PC-3 (cell line): ENCODE measurements at regions of chr14 and their contacts with region 1.

Region 1: GRCh38 chr14:91323671-91324605 is 79.4 kb upstream of the GPR68 start:
- DNase-seq: peak; percentile 70
- ATAC-seq: peak; percentile 63
- H3K4me3 ChIP-seq: no peak overlapping the region
- H3K27ac ChIP-seq: no peak overlapping the region
- H3K4me1 ChIP-seq: no peaks in the 10 kb centered on the region
- H3K27me3 ChIP-seq: no peaks in the 10 kb centered on the region
- CTCF ChIP-seq: peak; percentile 98

Region 2: GRCh38 chr14:91060351-91061055 is 263.4 kb before region 1 on chr14 and contains the start of gene RPS6KA5:
- CTCF ChIA-PET with region 1: no interaction called
- POLR2A ChIA-PET with region 1: no interaction called
- intact Hi-C with region 1: no loop called
- DNase-seq: peak; percentile 100
- ATAC-seq: peak; percentile 89
- H3K4me3 ChIP-seq: peak within 1 kb of the TSS; percentile 80
- H3K27ac ChIP-seq: peak within 1 kb of the TSS; percentile 71
- H3K4me1 ChIP-seq: peaks cover 18% of the 10 kb centered on the region
- H3K27me3 ChIP-seq: no peaks in the 10 kb centered on the region
- CTCF ChIP-seq: 0 out of 2 replicates have a peak, but pooled peaks have one; percentile 19
- total RNA-seq, gene RPS6KA5: 8.6 and 10.7 TPM in 2 replicates

Region 3: DNA sequence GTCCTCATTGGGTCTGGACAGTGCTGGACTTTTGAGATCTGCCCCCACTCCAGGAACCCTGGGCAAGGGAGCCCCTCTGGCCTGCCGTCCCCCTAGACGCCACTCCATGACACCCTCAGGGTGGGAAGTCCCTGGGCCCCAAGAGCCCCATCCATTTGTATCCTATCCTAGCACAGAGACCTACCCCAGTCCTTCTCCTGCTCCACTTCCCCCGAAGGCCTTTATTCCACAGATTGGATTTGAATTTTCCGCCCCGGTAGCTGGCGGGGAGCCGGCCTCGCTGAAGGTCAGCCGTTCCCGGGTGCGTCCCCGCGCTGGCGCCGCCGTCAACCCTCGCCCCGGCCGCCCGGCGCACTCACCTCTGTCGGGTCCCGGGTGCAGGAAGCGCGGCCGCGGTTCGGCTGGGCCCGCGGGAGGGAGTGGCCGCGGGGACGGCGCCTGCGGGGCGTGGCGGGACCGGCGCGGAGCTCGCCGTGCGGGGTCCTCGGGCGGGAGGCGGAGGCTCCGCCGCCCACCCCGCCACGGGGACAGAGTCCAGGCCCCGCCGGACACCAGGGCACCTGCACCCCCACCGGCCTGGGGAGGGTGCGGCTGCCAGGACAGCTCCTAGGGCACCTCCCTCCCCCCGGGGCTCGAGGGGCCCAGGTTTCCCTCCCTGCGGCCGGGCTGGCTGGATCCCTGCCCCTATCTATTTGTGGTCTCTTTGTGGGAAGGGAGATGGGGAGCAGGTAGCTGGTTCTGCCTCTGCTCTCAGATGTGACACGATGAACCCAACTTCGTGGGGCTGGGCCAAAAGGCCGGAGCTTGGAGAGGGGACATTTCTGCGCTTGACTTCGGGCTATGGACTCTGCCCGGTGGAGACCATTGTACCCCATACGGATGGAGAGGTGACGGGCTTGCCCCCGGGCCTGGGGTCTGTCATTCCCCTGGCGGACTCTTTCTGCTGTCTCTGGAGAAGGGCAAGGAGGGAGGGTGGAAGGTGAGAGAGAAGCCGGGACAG is 59.5 kb before region 1 on chr14:
- CTCF ChIA-PET with region 1: no interaction called
- POLR2A ChIA-PET with region 1: interaction called, 15 read pairs
- intact Hi-C with region 1: no loop called
- DNase-seq: peak; percentile 30
- ATAC-seq: peak; percentile 65
- H3K4me3 ChIP-seq: peak overlapping the region; percentile 77
- H3K27ac ChIP-seq: no peak overlapping the region
- H3K4me1 ChIP-seq: no peaks in the 10 kb centered on the region
- H3K27me3 ChIP-seq: no peaks in the 10 kb centered on the region
- CTCF ChIP-seq: no peak

Region 4: GRCh38 chr14:91418387-91419043 is 94.6 kb after region 1 on chr14:
- CTCF ChIA-PET with region 1: interaction called, 11 read pairs
- POLR2A ChIA-PET with region 1: no interaction called
- intact Hi-C with region 1: loop called (anchors 1 kb)
- DNase-seq: peak; percentile 72
- ATAC-seq: peak; percentile 13
- H3K4me3 ChIP-seq: peak overlapping the region; percentile 52
- H3K27ac ChIP-seq: peak overlapping the region; percentile 36; the same call in 1 of the 2 replicates
- H3K4me1 ChIP-seq: peaks cover 17% of the 10 kb centered on the region
- H3K27me3 ChIP-seq: no peaks in the 10 kb centered on the region
- CTCF ChIP-seq: peak; percentile 97

Region 5: GRCh38 chr14:91893007-91893406 is 569.1 kb after region 1 on chr14:
- CTCF ChIA-PET with region 1: no interaction called
- POLR2A ChIA-PET with region 1: no interaction called
- intact Hi-C with region 1: no loop called
- DNase-seq: peak; percentile 46
- ATAC-seq: no peak
- H3K4me3 ChIP-seq: no peak overlapping the region
- H3K27ac ChIP-seq: no peak overlapping the region
- H3K4me1 ChIP-seq: no peaks in the 10 kb centered on the region
- H3K27me3 ChIP-seq: no peaks in the 10 kb centered on the region; the same call in none of the 2 replicates
- CTCF ChIP-seq: peak; percentile 67

Region 6: GRCh38 chr14:92373336-92373735 is 1049.4 kb after region 1 on chr14:
- CTCF ChIA-PET with region 1: no interaction called
- POLR2A ChIA-PET with region 1: no interaction called
- intact Hi-C with region 1: no loop called
- DNase-seq: no peak
- ATAC-seq: no peak
- H3K4me3 ChIP-seq: no peak overlapping the region
- H3K27ac ChIP-seq: no peak overlapping the region
- H3K4me1 ChIP-seq: no peaks in the 10 kb centered on the region
- H3K27me3 ChIP-seq: no peaks in the 10 kb centered on the region
- CTCF ChIP-seq: no peak